ENCODE measurements at regions of chr11 and their contacts with region 1.

Region 1: DNA sequence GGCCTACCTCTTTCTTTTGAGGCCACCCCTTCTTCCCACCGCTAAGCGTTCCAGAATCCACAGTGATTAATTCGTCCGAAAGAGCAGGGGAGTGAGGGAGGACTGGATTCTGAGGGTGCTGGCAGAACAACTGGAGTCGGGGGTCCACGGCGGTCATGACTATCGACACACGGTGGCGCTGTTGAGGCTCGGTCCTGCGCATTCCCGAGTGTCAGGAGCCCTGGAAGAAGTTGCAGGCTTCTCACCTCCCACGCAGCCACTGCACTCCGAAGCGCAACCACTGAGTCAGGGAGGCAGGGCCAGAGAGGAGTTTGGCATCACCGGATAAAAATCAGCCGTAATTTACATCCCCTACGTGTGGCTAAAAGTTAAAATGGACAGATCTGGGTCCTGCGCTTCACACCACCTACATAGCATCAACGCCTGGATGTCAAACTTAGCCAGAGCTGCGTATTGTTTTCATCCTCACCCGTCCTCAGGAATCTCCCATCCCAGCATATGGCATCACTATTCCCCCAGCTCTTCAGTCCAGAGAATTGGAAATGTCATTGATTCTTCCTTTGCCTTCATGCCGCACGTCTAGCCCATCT is 10.7 kb upstream of the CTSF start:
- DNase-seq: peak; percentile 91
- ATAC-seq: peak; percentile 90
- H3K4me3 Mint-ChIP-seq: no peak overlapping the region
- H3K27ac Mint-ChIP-seq: no peak overlapping the region
- H3K4me1 Mint-ChIP-seq: peaks cover 16% of the 10 kb centered on the region
- H3K27me3 Mint-ChIP-seq: peaks cover 2% of the 10 kb centered on the region

Region 2: DNA sequence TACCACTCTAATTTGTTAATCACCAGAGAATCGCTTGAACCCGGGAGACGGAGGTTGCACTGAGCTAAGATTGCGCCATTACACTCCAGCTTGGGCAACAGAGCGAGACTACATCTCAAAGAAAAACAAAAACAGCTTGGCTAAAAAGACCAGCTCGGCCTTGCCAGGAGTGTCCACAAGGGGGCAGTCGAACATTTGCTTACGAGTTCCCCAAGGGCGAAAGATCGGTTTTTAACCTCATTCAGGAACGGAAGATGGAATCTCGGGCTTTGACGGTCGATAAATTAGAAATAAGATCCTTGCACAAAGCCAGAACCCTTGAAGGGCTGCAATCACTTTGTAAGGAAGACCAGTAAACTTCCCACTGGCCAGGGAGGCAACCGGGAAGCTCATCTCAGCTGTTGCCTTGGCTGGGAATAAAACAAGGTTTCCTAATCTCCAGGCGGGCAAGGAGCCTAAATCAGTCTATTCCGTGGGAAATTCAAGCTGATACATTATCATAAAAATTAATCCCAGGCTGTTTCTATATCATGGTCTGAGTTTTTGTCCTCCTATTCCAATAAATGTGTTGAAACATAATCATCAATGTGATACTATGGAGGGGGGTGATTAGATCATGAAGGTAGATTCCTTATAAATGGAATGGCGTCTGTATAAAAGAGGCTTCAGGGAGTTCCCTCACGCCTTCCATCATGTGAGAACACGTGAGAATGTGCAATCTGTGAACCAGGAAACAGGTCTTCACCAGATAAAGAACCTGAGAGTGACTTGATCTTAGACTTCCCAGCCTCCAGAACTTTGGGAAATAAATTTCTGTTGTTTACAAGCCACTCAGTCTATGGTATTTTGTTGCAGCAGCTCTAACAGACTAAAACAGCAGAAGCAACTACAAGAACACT is 192.7 kb before region 1 on chr11:
- CTCF ChIA-PET with region 1: no interaction called
- POLR2A ChIA-PET with region 1: no interaction called
- intact Hi-C with region 1: no loop called
- DNase-seq: peak; percentile 92
- ATAC-seq: peak; percentile 80
- H3K4me3 Mint-ChIP-seq: peak overlapping the region; percentile 47
- H3K27ac Mint-ChIP-seq: peak overlapping the region; percentile 15
- H3K4me1 Mint-ChIP-seq: peaks cover 7% of the 10 kb centered on the region
- H3K27me3 Mint-ChIP-seq: no peaks in the 10 kb centered on the region

Region 3: DNA sequence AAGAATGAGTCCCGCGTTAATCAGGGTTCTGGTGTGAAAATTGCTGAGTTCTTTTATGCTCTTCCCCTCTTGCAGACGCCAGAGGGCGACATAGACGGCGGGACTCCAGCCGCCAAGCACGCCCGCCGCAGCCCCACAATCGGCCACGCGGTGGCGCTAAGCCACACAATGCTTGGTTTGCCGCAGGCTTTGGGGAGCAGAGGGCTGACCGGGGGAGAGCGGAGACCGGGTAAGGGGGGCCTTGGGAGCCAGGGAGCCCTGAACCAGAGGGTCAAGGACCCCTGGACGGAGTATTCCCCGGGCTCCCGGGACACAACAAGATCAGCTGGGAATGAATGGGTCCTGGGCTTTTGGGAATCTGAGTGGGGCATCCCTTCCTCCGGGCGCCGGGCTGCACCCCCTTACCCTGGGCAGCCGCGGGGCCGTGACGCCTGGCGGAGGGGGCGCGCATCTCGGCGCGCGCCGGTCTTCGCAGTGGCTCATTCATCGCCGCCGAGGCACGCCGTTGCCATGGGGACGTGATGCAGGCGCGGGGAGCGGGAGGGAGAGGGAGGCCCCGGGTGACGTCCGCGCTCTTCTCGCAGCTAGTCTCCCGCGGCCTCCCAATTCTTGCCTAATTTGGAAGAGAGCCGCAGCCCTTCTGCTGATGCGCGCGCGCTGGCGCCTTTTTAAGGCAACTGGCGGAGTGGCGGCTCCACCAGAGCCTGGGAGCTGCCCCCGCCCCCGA is 170.5 kb before region 1 on chr11:
- CTCF ChIA-PET with region 1: no interaction called
- POLR2A ChIA-PET with region 1: no interaction called
- intact Hi-C with region 1: loop called in 1 of 2 experiments (anchors 1 kb)
- DNase-seq: peak; percentile 97
- ATAC-seq: peak; percentile 86
- H3K4me3 Mint-ChIP-seq: peak overlapping the region; percentile 67
- H3K27ac Mint-ChIP-seq: no peak overlapping the region
- H3K4me1 Mint-ChIP-seq: peaks cover 2% of the 10 kb centered on the region
- H3K27me3 Mint-ChIP-seq: peaks cover 20% of the 10 kb centered on the region

Region 4: DNA sequence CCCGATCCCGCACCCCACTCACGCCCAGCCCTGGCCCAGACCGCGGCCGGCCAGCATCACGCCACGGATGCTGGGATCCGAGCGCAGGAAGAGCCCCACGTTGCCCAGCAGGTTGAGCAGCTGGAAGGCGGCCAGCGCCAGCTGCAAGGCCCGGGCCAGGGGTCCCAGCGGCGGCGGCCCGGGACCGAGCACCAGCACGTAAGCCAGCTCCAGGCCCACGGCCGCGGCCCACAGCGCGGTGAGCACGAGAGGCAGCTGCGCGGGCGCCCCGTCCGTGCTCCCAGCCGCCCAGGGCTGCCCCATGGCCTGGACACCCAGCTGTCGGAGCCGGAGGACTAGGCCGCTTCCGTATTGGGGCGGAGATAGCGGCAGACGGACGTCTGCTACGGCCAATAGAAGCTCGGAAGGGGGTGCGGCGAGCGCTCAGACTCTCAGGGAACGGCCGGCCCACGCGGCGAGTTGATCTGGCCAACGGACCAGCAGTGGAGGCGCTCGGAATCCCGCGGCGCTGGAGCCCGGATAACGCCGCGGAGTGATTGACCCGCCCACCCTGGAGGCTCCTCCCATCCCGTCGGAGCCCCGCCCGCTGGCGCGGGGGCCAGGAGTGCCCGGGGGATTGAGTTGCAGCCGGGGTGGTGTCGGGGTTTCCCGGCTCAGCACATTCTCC is 33.3 kb before region 1 on chr11 and contains the start of gene ZDHHC24:
- CTCF ChIA-PET with region 1: interaction called, 3 read pairs
- POLR2A ChIA-PET with region 1: no interaction called
- intact Hi-C with region 1: loop called in 1 of 2 experiments (anchors 1 kb)
- DNase-seq: peak; percentile 95
- ATAC-seq: peak; percentile 94
- H3K4me3 Mint-ChIP-seq: peak within 1 kb of the TSS; percentile 76
- H3K27ac Mint-ChIP-seq: peak within 1 kb of the TSS; percentile 67
- H3K4me1 Mint-ChIP-seq: peaks cover 20% of the 10 kb centered on the region
- H3K27me3 Mint-ChIP-seq: peaks cover 5% of the 10 kb centered on the region
- total RNA-seq, gene ZDHHC24: 9.7 to 11.3 TPM

Region 5: DNA sequence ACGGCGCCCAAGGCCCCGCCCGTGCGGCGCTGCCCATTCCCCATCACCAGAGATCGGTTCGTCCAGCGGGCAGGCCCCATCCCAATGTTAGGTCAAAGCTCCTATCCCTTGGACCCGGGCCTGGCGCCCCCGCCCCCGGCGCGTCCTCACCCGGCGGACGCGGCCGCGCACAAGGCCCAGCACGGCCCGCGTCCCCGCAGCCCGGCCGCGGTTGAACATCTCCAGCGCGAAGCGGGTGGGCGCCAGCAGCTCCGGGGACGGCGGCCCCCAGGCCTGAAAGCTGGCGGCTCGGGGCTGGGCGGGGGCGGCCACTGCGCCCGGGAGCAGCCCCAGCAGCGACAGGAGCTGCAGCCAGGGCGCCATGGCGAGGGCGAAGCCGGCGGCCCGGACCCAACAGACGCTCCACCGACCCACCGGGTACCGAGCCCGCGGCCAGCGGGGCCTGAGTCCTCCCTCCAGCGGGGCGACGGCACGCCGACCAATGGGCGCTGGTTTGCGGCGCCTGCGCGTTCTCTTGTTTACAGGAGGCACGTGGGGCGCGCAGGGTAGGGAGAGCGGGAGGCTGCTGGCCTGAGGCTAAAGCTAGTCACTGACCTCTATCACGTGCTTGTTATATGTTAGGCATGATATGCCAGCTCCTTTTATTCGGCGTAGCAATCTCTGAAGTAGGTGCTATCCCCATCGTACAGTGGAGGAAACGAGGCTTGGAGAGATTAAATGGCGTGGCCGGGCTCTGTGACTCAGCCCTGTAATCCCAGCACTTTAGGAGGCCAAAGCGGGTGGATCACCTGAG is 10.8 kb before region 1 on chr11 and contains the start of gene CTSF:
- CTCF ChIA-PET with region 1: interaction called, 26 read pairs
- POLR2A ChIA-PET with region 1: no interaction called
- intact Hi-C with region 1: no loop called
- DNase-seq: peak; percentile 79
- ATAC-seq: peak; percentile 96
- H3K4me3 Mint-ChIP-seq: peak within 1 kb of the TSS; percentile 64
- H3K27ac Mint-ChIP-seq: no peak within 1 kb of the TSS
- H3K4me1 Mint-ChIP-seq: peaks cover 3% of the 10 kb centered on the region
- H3K27me3 Mint-ChIP-seq: no peaks in the 10 kb centered on the region
- total RNA-seq, gene CTSF: 1.3 to 2.0 TPM

Region 6: DNA sequence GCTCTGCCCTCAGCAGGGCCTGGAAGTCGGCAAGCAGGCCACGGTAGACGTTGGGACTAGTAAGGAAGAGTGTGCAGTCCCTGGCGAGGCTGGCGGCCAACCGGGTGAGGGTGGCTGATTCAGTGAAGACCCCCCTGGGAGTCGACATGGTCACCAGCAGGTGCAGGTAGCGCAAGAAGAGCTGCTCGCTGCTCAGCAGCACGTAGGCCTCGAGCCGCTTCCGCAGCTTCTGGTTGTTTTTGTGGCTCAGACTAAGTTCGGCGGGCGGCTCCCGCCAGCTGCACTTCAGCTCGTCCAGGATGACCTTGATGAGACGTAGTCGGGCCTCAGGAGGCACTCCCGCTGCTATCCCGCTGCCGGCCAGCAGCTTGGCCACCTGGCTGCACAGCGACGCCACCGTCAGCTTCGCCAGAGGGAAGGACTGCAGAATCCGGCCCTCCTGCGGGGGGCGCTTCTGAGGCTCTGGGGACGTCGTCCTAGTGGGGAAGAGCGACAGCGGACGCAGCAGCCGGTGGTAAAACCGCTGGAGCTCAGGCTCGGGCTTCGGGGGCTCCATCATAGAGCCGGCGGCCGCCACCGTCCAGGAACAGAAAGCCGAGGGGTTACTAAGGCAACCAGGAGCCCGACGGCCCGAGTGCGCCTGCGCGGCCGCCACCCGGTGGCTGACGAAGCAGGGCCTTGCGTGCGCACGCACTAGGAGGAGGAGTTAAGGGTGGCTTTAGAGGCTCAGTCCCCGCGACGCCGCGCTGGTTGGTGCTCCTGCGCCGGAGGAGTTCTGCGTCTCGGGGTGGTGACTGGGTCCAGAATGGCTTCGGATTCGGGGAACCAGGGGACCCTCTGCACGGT is 13.6 kb after region 1 on chr11 and contains the starts of genes CCDC87 and CCS:
- CTCF ChIA-PET with region 1: interaction called, 14 read pairs
- POLR2A ChIA-PET with region 1: no interaction called
- intact Hi-C with region 1: no loop called
- DNase-seq: peak; percentile 99
- ATAC-seq: peak; percentile 100
- H3K4me3 Mint-ChIP-seq: peak within 1 kb of the TSS; percentile 93
- H3K27ac Mint-ChIP-seq: peak within 1 kb of the TSS; percentile 98
- H3K4me1 Mint-ChIP-seq: peaks cover 19% of the 10 kb centered on the region
- H3K27me3 Mint-ChIP-seq: no peaks in the 10 kb centered on the region
- total RNA-seq, gene CCDC87: 0.09 to 0.14 TPM
- total RNA-seq, gene CCS: 16.3 to 24.0 TPM

Region 7: GRCh38 chr11:66694732-66695207 is 115.7 kb after region 1 on chr11:
- CTCF ChIA-PET with region 1: no interaction called
- POLR2A ChIA-PET with region 1: no interaction called
- intact Hi-C with region 1: no loop called
- DNase-seq: peak; percentile 92
- ATAC-seq: peak; percentile 97
- H3K4me3 Mint-ChIP-seq: no peak overlapping the region
- H3K27ac Mint-ChIP-seq: no peak overlapping the region
- H3K4me1 Mint-ChIP-seq: no peaks in the 10 kb centered on the region
- H3K27me3 Mint-ChIP-seq: no peaks in the 10 kb centered on the region

Region 8: GRCh38 chr11:66835768-66836405 is 256.8 kb after region 1 on chr11:
- CTCF ChIA-PET with region 1: no interaction called
- POLR2A ChIA-PET with region 1: no interaction called
- intact Hi-C with region 1: loop called (anchors 2 to 10 kb)
- DNase-seq: no peak
- ATAC-seq: no peak
- H3K4me3 Mint-ChIP-seq: no peak overlapping the region
- H3K27ac Mint-ChIP-seq: peak overlapping the region; percentile 6
- H3K4me1 Mint-ChIP-seq: peaks cover 20% of the 10 kb centered on the region
- H3K27me3 Mint-ChIP-seq: no peaks in the 10 kb centered on the region

Measured in activated CD4-positive, alpha-beta T cell treated with anti-CD3 and anti-CD28 coated beads for 36 hours (primary cell).